AG04449 (cell line): ENCODE measurements at regions of chr17 and their contacts with region 1.

Region 1: GRCh38 chr17:27760069-27760885 is 40.1 kb downstream of the NOS2 start:
- DNase-seq: no peak
- H3K4me3 ChIP-seq: no peak overlapping the region
- CTCF ChIP-seq: peak; percentile 78

Region 2: DNA sequence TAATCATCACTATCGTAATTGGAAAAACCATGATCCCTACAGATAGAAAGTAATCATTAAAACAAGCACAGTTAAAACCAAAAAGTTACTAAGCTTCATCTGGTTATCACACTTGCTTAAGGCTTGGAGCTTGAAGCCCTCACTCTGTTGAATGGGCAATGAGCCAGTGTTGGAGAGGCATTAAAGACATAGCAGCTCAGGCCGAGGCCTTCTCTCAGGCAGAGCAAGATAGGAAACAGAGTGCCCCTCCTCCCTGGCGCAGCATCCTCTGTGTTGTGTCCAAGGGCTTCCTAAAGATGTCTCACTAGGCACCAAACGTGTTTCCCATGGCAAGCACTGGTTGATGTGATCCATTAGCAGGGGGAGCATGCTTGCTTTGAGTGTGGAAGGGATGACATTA is 164.2 kb before region 1 on chr17:
- CTCF ChIA-PET with region 1: no interaction called
- POLR2A ChIA-PET with region 1: no interaction called
- DNase-seq: no peak
- H3K4me3 ChIP-seq: no peak overlapping the region
- CTCF ChIP-seq: no peak

Region 3: DNA sequence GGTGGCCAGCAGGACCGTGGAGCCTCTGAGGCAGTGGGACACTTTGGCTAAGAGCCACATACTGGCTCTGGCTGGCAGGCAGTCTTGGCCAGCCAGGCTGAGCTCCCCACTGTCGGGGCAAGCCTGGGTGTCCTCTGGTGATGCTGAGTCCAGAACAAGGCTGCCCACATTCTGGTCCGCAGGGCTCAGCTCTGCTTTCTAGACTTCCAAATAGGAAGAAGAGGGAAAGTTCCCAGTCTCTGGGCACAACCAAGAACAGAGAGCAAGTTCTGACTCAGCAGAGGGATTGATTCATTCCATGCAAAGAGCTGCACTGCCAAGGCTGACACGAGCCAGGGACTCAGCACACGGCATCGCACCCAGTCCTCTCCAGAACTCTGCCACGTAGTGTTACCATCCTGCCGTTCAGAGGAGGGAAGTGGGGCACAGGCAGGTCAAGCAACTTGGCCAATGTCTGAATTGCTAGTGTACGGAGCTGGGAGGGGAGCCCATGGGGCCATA is 18.9 kb before region 1 on chr17:
- CTCF ChIA-PET with region 1: interaction called, 10 read pairs
- POLR2A ChIA-PET with region 1: no interaction called
- DNase-seq: no peak
- H3K4me3 ChIP-seq: no peak overlapping the region
- CTCF ChIP-seq: no peak

Region 4: GRCh38 chr17:27944546-27945332 is 184.5 kb after region 1 on chr17:
- CTCF ChIA-PET with region 1: no interaction called
- POLR2A ChIA-PET with region 1: no interaction called
- DNase-seq: no peak
- H3K4me3 ChIP-seq: no peak overlapping the region
- CTCF ChIP-seq: no peak

Region 5: DNA sequence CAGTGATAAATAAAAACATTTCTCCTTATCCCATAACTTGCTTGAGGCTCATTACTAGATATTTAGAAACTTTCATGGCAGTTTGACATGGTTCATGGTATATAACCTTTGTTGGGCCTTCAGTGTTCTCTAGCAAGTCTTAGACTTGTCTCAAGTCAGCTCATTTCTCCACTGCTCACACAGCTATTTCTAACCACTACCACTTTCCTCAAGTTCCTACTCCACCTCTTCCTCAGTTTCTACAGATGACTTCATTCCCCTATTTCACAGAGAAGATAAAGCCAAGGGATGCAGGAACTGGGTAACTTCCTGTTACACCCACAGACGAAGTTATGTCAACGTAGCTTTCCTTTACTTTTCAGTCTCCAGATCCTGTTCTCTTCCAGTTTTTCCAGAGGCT is 305.4 kb after region 1 on chr17:
- CTCF ChIA-PET with region 1: no interaction called
- POLR2A ChIA-PET with region 1: no interaction called
- DNase-seq: no peak
- H3K4me3 ChIP-seq: no peak overlapping the region
- CTCF ChIP-seq: no peak